Naive thymus-derived CD4-positive, alpha-beta T cell (primary cell): ENCODE measurements at regions of chr15 and their contacts with region 1.

Region 1: DNA sequence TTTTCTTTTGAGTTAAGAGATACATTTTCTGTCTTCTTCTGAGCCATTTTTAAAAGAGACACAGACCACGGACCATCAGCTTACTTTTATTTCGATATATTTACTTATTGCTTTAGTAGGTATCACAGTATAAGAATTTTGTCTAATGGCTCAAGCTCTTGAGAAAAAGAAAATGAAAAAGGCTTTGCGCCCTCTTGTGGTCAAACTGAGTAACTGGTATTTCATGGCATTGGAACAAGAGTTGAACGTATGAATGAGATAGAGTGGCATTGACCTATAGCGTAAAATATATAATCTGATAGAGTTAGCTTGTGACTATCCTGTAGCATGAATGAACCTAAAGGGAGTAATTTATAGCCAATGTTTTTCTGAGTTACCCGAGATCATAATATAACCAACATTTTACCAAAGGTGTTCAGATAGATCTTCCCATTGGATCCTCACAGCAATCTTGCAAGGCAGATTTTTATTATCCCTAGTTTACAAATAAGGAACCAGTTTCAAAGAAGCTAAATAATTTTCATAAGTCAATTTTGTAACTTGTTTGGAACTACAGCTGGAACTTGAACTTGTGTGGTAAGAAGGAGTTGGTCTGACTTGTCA is 154.6 kb downstream of the POLR2M start:
- DNase-seq: peak in 7 of 9 donors; percentile 16 to 67 (median 53)
- ATAC-seq: peak; percentile 47
- H3K4me3 ChIP-seq: no peak overlapping the region
- H3K4me3 Mint-ChIP-seq: no peak overlapping the region
- H3K27ac ChIP-seq: no peak overlapping the region
- H3K27ac Mint-ChIP-seq: no peak overlapping the region
- H3K4me1 ChIP-seq: no peaks in the 10 kb centered on the region
- H3K4me1 Mint-ChIP-seq: peaks cover 0 to 9% (median 0%) of the 10 kb centered on the region in 7 donors
- H3K27me3 ChIP-seq: no peaks in the 10 kb centered on the region
- H3K27me3 Mint-ChIP-seq: peaks cover 8 to 68% (median 12%) of the 10 kb centered on the region in 5 donors

Region 2: GRCh38 chr15:57340682-57341259 is 520.4 kb before region 1 on chr15:
- CTCF ChIA-PET with region 1: no interaction called
- POLR2A ChIA-PET with region 1: no interaction called
- intact Hi-C with region 1: loop called in 1 of 2 experiments (anchors 5 kb)
- DNase-seq: peak in 3 of 9 donors; percentile 23 to 25 (median 23)
- ATAC-seq: peak; percentile 48
- H3K4me3 ChIP-seq: no peak overlapping the region
- H3K4me3 Mint-ChIP-seq: no peak overlapping the region
- H3K27ac ChIP-seq: no peak overlapping the region
- H3K27ac Mint-ChIP-seq: no peak overlapping the region
- H3K4me1 ChIP-seq: no peaks in the 10 kb centered on the region
- H3K4me1 Mint-ChIP-seq: no peaks in the 10 kb centered on the region
- H3K27me3 ChIP-seq: no peaks in the 10 kb centered on the region
- H3K27me3 Mint-ChIP-seq: peaks cover 0 to 16% (median 4%) of the 10 kb centered on the region in 5 donors

Region 3: DNA sequence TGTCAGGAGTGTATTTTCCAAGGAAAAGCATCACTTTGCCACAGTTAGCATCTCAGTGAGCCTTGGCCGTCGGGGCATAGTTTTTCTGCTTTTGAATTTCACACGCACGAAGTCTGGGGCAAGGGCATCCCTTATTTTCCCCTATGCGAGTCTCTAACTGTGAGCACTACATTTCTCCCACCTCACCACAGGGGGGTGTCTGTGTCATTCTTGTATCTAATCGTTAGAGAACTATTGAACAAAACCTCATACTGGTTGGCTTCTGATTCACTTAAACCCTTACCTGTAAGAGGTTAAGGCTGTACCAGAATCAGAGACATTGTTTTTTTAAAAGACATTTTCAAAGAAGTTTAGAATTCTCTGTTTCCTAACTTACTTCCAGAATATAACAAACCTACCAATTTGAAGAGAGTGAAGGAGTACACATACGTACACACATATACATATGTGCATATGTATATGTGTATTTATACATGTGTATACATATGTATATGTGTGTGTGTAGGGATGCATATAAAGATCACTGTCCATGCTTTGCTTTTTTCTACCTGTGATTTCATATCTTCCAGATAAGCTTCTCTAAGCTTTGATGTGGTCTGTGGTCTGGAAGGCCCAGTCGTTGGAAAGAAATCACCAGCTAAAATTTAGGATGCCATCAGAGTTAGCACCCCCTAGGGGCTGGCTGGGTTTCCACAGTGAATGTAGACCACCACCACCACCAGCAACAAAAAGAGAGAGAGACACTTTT is 220.0 kb before region 1 on chr15:
- CTCF ChIA-PET with region 1: interaction called, 7 read pairs
- POLR2A ChIA-PET with region 1: no interaction called
- intact Hi-C with region 1: loop called (anchors 1 to 5 kb)
- DNase-seq: peak in 7 of 9 donors; percentile 10 to 36 (median 16)
- ATAC-seq: peak; percentile 32
- H3K4me3 ChIP-seq: no peak overlapping the region
- H3K4me3 Mint-ChIP-seq: no peak overlapping the region
- H3K27ac ChIP-seq: no peak overlapping the region
- H3K27ac Mint-ChIP-seq: peak overlapping the region in 1 of 9 donors; percentile 23
- H3K4me1 ChIP-seq: no peaks in the 10 kb centered on the region
- H3K4me1 Mint-ChIP-seq: peaks cover 0 to 11% (median 4%) of the 10 kb centered on the region in 7 donors
- H3K27me3 ChIP-seq: no peaks in the 10 kb centered on the region
- H3K27me3 Mint-ChIP-seq: peaks cover 0 to 7% (median 0%) of the 10 kb centered on the region in 5 donors

Region 4: GRCh38 chr15:57667171-57667849 is 193.8 kb before region 1 on chr15:
- CTCF ChIA-PET with region 1: interaction called, 5 read pairs
- POLR2A ChIA-PET with region 1: no interaction called
- intact Hi-C with region 1: loop called in 1 of 2 experiments (anchors 1 kb)
- DNase-seq: peak in 2 of 9 donors; percentile 4 to 8
- ATAC-seq: no peak
- H3K4me3 ChIP-seq: no peak overlapping the region
- H3K4me3 Mint-ChIP-seq: no peak overlapping the region
- H3K27ac ChIP-seq: no peak overlapping the region
- H3K27ac Mint-ChIP-seq: no peak overlapping the region
- H3K4me1 ChIP-seq: no peaks in the 10 kb centered on the region
- H3K4me1 Mint-ChIP-seq: peaks cover 0 to 2% (median 0%) of the 10 kb centered on the region in 7 donors
- H3K27me3 ChIP-seq: no peaks in the 10 kb centered on the region
- H3K27me3 Mint-ChIP-seq: peaks cover 0 to 36% (median 0%) of the 10 kb centered on the region in 5 donors

Region 5: GRCh38 chr15:57732526-57733331 is 128.4 kb before region 1 on chr15:
- CTCF ChIA-PET with region 1: interaction called, 3 read pairs
- POLR2A ChIA-PET with region 1: no interaction called
- intact Hi-C with region 1: loop called (anchors 1 to 5 kb)
- DNase-seq: peak in 6 of 9 donors; percentile 16 to 51 (median 34)
- ATAC-seq: peak; percentile 52
- H3K4me3 ChIP-seq: no peak overlapping the region
- H3K4me3 Mint-ChIP-seq: peak overlapping the region in 1 of 10 donors; percentile 24
- H3K27ac ChIP-seq: no peak overlapping the region
- H3K27ac Mint-ChIP-seq: no peak overlapping the region
- H3K4me1 ChIP-seq: no peaks in the 10 kb centered on the region
- H3K4me1 Mint-ChIP-seq: peaks cover 4 to 21% (median 14%) of the 10 kb centered on the region in 7 donors
- H3K27me3 ChIP-seq: no peaks in the 10 kb centered on the region
- H3K27me3 Mint-ChIP-seq: no peaks in the 10 kb centered on the region

Region 6: GRCh38 chr15:57751177-57751800 is 109.8 kb before region 1 on chr15:
- CTCF ChIA-PET with region 1: interaction called, 5 read pairs
- POLR2A ChIA-PET with region 1: no interaction called
- intact Hi-C with region 1: loop called (anchors 1 to 5 kb)
- DNase-seq: no peak
- ATAC-seq: no peak
- H3K4me3 ChIP-seq: no peak overlapping the region
- H3K4me3 Mint-ChIP-seq: no peak overlapping the region
- H3K27ac ChIP-seq: no peak overlapping the region
- H3K27ac Mint-ChIP-seq: no peak overlapping the region
- H3K4me1 ChIP-seq: no peaks in the 10 kb centered on the region
- H3K4me1 Mint-ChIP-seq: peaks cover 0 to 7% (median 0%) of the 10 kb centered on the region in 7 donors
- H3K27me3 ChIP-seq: no peaks in the 10 kb centered on the region
- H3K27me3 Mint-ChIP-seq: peaks cover 0 to 8% (median 0%) of the 10 kb centered on the region in 5 donors

Region 7: GRCh38 chr15:57890351-57890750 is 29.2 kb after region 1 on chr15:
- CTCF ChIA-PET with region 1: no interaction called
- POLR2A ChIA-PET with region 1: no interaction called
- intact Hi-C with region 1: no loop called
- DNase-seq: no peak
- ATAC-seq: no peak
- H3K4me3 ChIP-seq: no peak overlapping the region
- H3K4me3 Mint-ChIP-seq: no peak overlapping the region
- H3K27ac ChIP-seq: no peak overlapping the region
- H3K27ac Mint-ChIP-seq: no peak overlapping the region
- H3K4me1 ChIP-seq: no peaks in the 10 kb centered on the region
- H3K4me1 Mint-ChIP-seq: peaks cover 0 to 2% (median 0%) of the 10 kb centered on the region in 7 donors
- H3K27me3 ChIP-seq: no peaks in the 10 kb centered on the region
- H3K27me3 Mint-ChIP-seq: peaks cover 12 to 41% (median 29%) of the 10 kb centered on the region in 5 donors

Region 8: GRCh38 chr15:57994221-57995049 is 133.3 kb after region 1 on chr15:
- CTCF ChIA-PET with region 1: no interaction called
- POLR2A ChIA-PET with region 1: no interaction called
- intact Hi-C with region 1: no loop called
- DNase-seq: no peak
- ATAC-seq: no peak
- H3K4me3 ChIP-seq: no peak overlapping the region
- H3K4me3 Mint-ChIP-seq: no peak overlapping the region
- H3K27ac ChIP-seq: no peak overlapping the region
- H3K27ac Mint-ChIP-seq: no peak overlapping the region
- H3K4me1 ChIP-seq: no peaks in the 10 kb centered on the region
- H3K4me1 Mint-ChIP-seq: no peaks in the 10 kb centered on the region
- H3K27me3 ChIP-seq: peaks cover 0 to 4% of the 10 kb centered on the region in 2 donors
- H3K27me3 Mint-ChIP-seq: peaks cover 31 to 59% (median 48%) of the 10 kb centered on the region in 5 donors